HEK293 (cell line): ENCODE measurements at regions of chr2 and their contacts with region 1.

Region 1: DNA sequence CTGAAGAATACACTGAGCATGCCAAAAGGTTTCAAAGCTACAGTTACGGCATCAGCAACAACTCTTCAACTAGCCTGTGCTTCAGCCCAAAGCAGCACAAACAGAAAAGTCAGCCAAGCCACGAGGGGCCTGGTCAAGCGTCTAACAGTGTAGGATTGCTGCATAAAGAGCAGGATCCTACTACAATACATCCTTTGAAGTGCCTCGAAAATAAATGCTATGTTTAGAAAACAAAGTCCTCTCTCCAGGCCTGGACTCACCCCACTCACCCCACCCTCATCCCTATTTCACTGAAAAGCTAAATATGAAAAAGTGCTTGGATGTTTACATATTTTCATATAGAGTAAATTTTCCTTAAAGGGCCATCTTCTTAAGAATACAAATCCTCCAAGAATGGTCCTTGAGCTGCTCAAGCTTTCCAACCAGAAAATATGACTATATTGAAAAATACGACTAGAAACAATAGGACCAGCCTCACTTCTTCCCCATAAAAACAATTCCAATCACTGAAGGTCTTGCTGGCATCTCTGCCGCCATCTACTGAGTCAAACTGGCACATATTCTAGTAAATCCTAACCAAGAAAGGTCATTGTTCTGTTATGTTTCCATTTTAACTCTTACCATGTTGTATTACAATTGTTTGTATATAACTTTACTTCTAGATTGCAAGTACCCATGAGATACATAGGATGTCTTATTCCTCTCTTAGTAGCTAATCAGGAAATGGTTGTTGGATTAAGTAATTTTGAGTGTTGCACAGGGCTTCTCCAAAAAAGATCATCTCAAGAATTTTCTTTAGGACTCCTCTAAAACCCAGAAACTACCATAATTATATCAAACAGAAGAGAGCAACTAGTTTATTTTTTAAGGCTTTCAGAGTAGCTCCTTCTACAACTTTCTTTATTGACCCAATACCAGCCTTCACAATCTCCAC is 63.6 kb downstream of the CLHC1 start:
- H3K4me3 ChIP-seq: no peak overlapping the region
- H3K27ac ChIP-seq: no peak overlapping the region
- H3K4me1 ChIP-seq: no peaks in the 10 kb centered on the region
- CTCF ChIP-seq: 0 out of 2 replicates have a peak, but pooled peaks have one; percentile 18

Region 2: GRCh38 chr2:55014962-55015939 is 153.2 kb before region 1 on chr2:
- CTCF ChIA-PET with region 1: interaction called, 121 read pairs
- POLR2A ChIA-PET with region 1: no interaction called
- H3K4me3 ChIP-seq: no peak overlapping the region
- H3K27ac ChIP-seq: no peak overlapping the region
- H3K4me1 ChIP-seq: peaks cover 24% of the 10 kb centered on the region
- CTCF ChIP-seq: peak; percentile 33; the same call in 1 of the 2 replicates

Region 3: GRCh38 chr2:55150834-55151233 is 17.7 kb before region 1 on chr2:
- CTCF ChIA-PET with region 1: interaction called, 10 read pairs
- POLR2A ChIA-PET with region 1: no interaction called
- H3K4me3 ChIP-seq: no peak overlapping the region
- H3K27ac ChIP-seq: no peak overlapping the region
- H3K4me1 ChIP-seq: no peaks in the 10 kb centered on the region
- CTCF ChIP-seq: no peak